HepG2 (cell line): ENCODE measurements at regions of chr22 and their contacts with region 1.

Region 1: DNA sequence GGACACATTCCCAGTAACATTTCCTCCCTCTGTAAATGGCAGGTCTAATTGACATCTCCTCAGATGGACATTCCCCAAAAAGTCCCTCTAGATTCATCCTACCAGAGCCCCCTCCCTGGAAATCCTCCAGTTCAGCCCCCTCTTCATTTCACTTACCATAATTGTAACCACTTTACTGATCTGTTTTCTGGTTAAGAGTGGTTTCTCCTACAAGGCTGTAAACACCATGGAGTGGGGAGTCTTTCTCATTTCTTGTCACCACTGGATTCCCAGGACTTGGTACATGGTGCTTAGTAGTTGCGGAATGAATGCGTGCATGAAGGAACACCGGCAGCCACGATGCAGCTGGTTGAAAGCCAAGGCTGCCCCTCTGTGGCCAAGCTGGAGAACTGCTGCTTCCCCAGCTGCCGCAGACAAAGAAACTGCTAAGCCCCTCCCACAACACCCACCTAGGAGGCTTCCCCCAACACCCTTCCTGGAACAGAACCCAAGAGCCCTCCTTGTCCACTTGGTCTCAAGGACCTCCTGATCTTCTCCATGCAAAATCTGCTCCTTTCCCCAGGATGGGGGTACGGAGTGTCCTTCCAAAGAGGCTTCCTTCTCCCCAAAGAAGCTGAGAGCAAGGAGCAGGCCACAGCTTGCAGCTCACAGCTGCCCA is 18.6 kb upstream of the SCARF2 start:
- DNase-seq: peak; percentile 68
- ATAC-seq: peak; percentile 88
- H3K4me3 ChIP-seq: no peak overlapping the region
- H3K27ac ChIP-seq: no peak overlapping the region
- H3K4me1 ChIP-seq: no peaks in the 10 kb centered on the region
- H3K27me3 ChIP-seq: no peaks in the 10 kb centered on the region
- CTCF ChIP-seq: peak; percentile 95
- EP300 ChIP-seq: no peak
- POLR2A ChIP-seq: no peak
- RAD21 ChIP-seq: peak; percentile 96

Region 2: GRCh38 chr22:20418211-20418788 is 37.9 kb before region 1 on chr22:
- CTCF ChIA-PET with region 1: interaction called, 66 read pairs
- POLR2A ChIA-PET with region 1: interaction called, 8 read pairs
- in situ Hi-C with region 1: loop called (anchors 5 kb)
- intact Hi-C with region 1: loop called (anchors 1 kb)
- DNase-seq: peak; percentile 57
- ATAC-seq: peak; percentile 78
- H3K4me3 ChIP-seq: peak overlapping the region; percentile 51 to 74 (median 57); a peak in 5 of 6 replicates
- H3K27ac ChIP-seq: no peak overlapping the region
- H3K4me1 ChIP-seq: peaks cover 52% of the 10 kb centered on the region
- H3K27me3 ChIP-seq: peaks cover 0 to 8% of the 10 kb centered on the region in 2 experiments; a peak in 3 of 5 replicates
- CTCF ChIP-seq: peak; percentile 93
- EP300 ChIP-seq: no peak
- POLR2A ChIP-seq: no peak
- RAD21 ChIP-seq: peak; percentile 72

Region 3: DNA sequence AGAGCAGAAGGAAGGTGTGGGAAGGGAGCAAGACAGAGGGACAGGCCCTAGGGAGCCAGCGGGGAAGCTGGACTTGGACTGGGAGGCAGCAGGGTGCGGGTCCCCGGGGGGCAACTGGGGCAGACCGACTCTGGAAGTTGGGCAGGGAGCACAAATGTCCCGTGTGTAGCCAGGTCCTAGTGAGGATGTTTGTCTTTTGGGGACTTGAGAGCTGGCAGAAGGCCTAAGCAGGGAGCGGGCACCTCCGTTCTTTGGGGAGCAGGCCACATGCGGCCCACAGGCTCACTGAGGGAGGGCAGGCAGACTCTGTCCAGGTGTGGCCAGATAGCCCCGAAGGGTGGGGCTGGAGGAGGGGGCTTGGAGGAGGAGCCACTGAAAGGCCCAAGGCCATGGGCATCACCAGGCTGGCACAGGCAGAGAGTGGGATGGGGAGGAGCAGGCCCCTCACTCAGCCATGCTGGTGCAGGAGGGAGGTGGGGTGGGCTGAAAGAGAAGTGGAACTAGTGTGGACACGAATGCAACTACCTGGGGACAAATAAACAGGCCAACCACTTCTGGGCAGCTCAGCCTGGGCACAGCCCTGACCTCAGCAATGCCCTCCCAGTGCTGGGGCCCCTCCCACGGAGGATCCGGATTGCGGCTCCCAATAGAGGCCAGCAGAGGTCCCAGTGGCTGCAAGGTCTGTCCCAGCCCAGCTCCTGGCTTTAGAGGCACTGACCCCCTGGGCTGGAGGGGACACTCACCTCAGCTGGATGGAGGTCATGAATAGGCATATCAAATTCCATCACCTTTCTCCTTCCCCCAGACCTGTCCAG is 17.3 kb before region 1 on chr22:
- CTCF ChIA-PET with region 1: interaction called, 11 read pairs
- POLR2A ChIA-PET with region 1: no interaction called
- in situ Hi-C with region 1: no loop called
- intact Hi-C with region 1: loop called (anchors 1 kb)
- DNase-seq: peak; percentile 37
- ATAC-seq: peak; percentile 68
- H3K4me3 ChIP-seq: peak overlapping the region in 1 of 3 experiments; percentile 87; a peak in 1 of 6 replicates
- H3K27ac ChIP-seq: no peak overlapping the region
- H3K4me1 ChIP-seq: peaks cover 44% of the 10 kb centered on the region
- H3K27me3 ChIP-seq: no peaks in the 10 kb centered on the region
- CTCF ChIP-seq: peak; percentile 53
- EP300 ChIP-seq: no peak
- POLR2A ChIP-seq: no peak
- RAD21 ChIP-seq: no peak

Region 4: GRCh38 chr22:20536590-20537324 is 80.6 kb after region 1 on chr22:
- CTCF ChIA-PET with region 1: no interaction called
- POLR2A ChIA-PET with region 1: no interaction called
- in situ Hi-C with region 1: no loop called
- intact Hi-C with region 1: no loop called
- DNase-seq: no peak
- ATAC-seq: no peak
- H3K4me3 ChIP-seq: no peak overlapping the region
- H3K27ac ChIP-seq: no peak overlapping the region
- H3K4me1 ChIP-seq: peaks cover 11% of the 10 kb centered on the region
- H3K27me3 ChIP-seq: no peaks in the 10 kb centered on the region
- CTCF ChIP-seq: no peak
- EP300 ChIP-seq: no peak
- POLR2A ChIP-seq: no peak
- RAD21 ChIP-seq: no peak